OCI-LY7 (cell line): ENCODE measurements at regions of chr6 and their contacts with region 1.

Region 1: GRCh38 chr6:111967131-111967530 is 86.8 kb upstream of the CCN6 start:
- DNase-seq: no peak
- H3K4me3 ChIP-seq: no peak overlapping the region
- H3K27ac ChIP-seq: no peak overlapping the region
- H3K4me1 ChIP-seq: no peaks in the 10 kb centered on the region
- CTCF ChIP-seq: no peak

Region 2: GRCh38 chr6:111912904-111913303 is 54.2 kb before region 1 on chr6:
- CTCF ChIA-PET with region 1: no interaction called
- POLR2A ChIA-PET with region 1: no interaction called
- intact Hi-C with region 1: loop called (anchors 5 kb)
- DNase-seq: no peak
- H3K4me3 ChIP-seq: no peak overlapping the region
- H3K27ac ChIP-seq: no peak overlapping the region
- H3K4me1 ChIP-seq: no peaks in the 10 kb centered on the region
- CTCF ChIP-seq: no peak